Activated T-helper 1 cell treated with anti-CD3 and anti-CD28 coated beads, Interleukin-12 subunit alpha, Interleukin-12 subunit beta, Interleukin-2, Interleukin-4 antibody, amounts not matched to agents 30 ng/mL and 10 ng/mL and 1 ng/mL, durations not matched to agents 14 hours and 24 hours and 36 hours (primary cell): ENCODE measurements at regions of chr1 and their contacts with region 1.

Region 1: GRCh38 chr1:52365746-52366516 is at the start of gene CC2D1B:
- DNase-seq: peak; percentile 100
- H3K4me3 Mint-ChIP-seq: peak within 1 kb of the TSS; percentile 90
- H3K27ac Mint-ChIP-seq: peak within 1 kb of the TSS; percentile 84
- H3K4me1 Mint-ChIP-seq: peaks cover 55% of the 10 kb centered on the region
- H3K27me3 Mint-ChIP-seq: no peaks in the 10 kb centered on the region
- total RNA-seq, gene CC2D1B: 40.5 and 42.3 TPM in 2 replicates

Region 2: DNA sequence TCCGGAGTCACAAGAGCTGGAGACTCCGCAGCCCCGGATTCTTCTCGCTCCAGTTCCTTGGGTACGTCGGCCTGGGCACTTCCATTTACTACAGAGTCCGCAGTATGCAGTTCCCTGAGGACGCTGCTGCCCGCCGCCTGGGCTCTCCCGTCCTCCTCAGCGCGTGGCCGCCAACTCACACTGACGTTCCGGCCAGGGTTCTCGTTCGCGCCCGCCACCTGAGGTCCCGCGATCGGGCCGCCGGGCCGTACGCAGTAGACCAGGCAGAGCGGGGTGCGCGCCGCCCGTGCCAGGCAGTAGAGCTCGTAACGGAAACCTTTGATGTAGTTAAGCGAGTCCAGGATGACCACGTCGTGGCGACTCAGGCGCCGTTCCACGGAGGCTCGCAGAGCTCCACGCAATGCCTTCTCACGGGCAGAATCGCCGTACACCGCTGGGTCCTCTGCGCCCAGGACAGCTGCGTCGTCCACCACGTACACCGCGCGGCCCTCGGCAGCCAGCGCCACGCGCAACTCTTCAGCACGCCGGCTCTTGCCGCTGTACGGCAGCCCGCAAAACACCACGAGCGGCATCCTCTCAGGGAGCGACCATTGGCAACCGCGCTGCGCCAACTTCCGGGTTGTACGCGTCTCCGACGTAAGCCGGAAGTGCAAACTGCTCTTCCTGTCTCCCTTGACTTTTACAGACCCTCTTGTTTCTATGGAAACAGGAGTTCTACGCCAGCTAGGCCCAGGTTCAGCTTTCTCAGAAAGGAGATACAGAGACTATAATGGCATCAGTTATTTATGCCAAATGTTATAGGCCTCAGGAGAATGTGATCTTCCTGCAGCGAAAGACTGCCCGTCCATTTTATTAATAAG is 332.5 kb before region 1 on chr1 and contains the start of gene KTI12:
- intact Hi-C with region 1: loop called (anchors 2 kb)
- DNase-seq: peak; percentile 84
- H3K4me3 Mint-ChIP-seq: peak within 1 kb of the TSS; percentile 93
- H3K27ac Mint-ChIP-seq: peak within 1 kb of the TSS; percentile 89
- H3K4me1 Mint-ChIP-seq: peaks cover 39% of the 10 kb centered on the region
- H3K27me3 Mint-ChIP-seq: no peaks in the 10 kb centered on the region
- total RNA-seq, gene KTI12: 21.6 and 22.4 TPM in 2 replicates

Region 3: GRCh38 chr1:52404116-52404986 is 38.4 kb after region 1 on chr1 and contains the starts of genes ORC1 and PRPF38A:
- intact Hi-C with region 1: loop called (anchors 1 kb)
- DNase-seq: peak; percentile 94
- H3K4me3 Mint-ChIP-seq: peak within 1 kb of the TSS; percentile 100
- H3K27ac Mint-ChIP-seq: peak within 1 kb of the TSS; percentile 100
- H3K4me1 Mint-ChIP-seq: peaks cover 45% of the 10 kb centered on the region
- H3K27me3 Mint-ChIP-seq: no peaks in the 10 kb centered on the region
- total RNA-seq, gene ORC1: 39.6 and 40.3 TPM in 2 replicates
- total RNA-seq, gene PRPF38A: 103 and 105 TPM in 2 replicates

Region 4: DNA sequence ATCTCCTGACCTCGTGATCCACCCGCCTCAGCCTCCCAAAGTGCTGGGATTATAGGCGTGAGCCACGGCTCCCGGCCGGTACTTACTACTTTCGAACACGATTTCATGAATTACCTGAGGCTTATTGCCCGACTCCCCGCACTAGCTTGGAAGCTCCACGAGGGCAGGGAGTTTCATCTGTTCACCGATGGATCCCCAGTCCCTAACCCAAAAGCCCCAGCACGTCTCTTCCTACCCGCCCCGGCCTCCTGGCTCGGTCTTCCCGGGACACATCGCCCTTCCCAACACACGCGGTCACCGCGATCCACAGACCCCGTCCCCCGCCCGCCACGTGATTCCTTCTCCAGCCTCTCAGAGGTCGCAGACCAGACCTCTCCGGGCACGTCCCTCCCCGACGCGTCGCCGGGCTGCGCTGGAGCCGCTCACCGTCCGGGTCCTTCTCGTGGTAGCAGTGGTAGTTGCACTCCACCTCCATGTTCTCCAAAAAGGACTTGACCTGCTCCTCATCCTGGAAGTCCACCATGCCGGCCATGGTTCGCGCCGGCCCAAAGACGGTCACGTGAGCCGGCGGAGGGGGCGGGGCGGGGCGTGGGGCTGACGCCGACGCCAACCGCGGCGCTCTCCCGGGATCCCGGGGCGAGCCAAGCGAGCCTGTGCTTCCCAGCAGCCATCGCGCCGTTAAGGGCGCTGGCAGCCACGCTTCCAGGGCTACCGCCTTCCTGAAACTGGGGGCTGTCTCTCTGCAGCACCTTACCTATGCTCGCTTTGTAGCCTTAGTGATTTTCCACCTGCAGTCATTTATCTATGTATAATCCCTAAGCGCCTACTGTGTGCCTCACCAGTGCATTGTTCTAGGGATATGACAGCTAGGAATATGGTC is 332.1 kb after region 1 on chr1 and contains the start of gene COA7:
- intact Hi-C with region 1: loop called (anchors 1 kb)
- DNase-seq: peak; percentile 62
- H3K4me3 Mint-ChIP-seq: peak within 1 kb of the TSS; percentile 95
- H3K27ac Mint-ChIP-seq: peak within 1 kb of the TSS; percentile 89
- H3K4me1 Mint-ChIP-seq: peaks cover 41% of the 10 kb centered on the region
- H3K27me3 Mint-ChIP-seq: peaks cover 4% of the 10 kb centered on the region
- total RNA-seq, gene COA7: 37.6 and 39.9 TPM in 2 replicates

Region 5: GRCh38 chr1:53196485-53197270 is 830.7 kb after region 1 on chr1 and contains the start of gene CPT2:
- intact Hi-C with region 1: loop called (anchors 1 kb)
- DNase-seq: peak; percentile 92
- H3K4me3 Mint-ChIP-seq: peak within 1 kb of the TSS; percentile 95
- H3K27ac Mint-ChIP-seq: peak within 1 kb of the TSS; percentile 92
- H3K4me1 Mint-ChIP-seq: peaks cover 28% of the 10 kb centered on the region
- H3K27me3 Mint-ChIP-seq: no peaks in the 10 kb centered on the region
- total RNA-seq, gene CPT2: 18.5 and 19.4 TPM in 2 replicates